AG04449 (cell line): ENCODE measurements at regions of chr1 and their contacts with region 1.

Region 1: GRCh38 chr1:70134148-70134547 is 71.2 kb downstream of the LRRC40 start:
- DNase-seq: no peak
- H3K4me3 ChIP-seq: no peak overlapping the region
- CTCF ChIP-seq: no peak

Region 2: DNA sequence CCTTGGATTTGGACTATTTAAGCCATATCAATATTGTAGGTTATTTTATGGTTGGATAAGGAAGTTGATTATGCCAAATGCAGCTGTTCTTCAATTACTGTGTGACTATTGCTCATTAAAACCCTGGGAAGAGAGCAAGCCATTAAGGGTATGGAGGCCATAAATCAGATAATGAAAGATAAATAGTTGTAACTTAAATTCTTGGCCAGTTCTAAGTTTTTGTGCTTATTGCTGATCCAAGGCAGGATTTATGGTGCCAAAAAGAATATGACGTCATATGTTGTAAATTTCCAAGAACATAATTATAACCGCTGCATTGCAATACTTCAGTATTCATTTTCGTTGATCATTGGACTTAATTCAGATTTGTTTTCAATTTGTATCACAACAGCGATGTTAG is 140.4 kb before region 1 on chr1:
- CTCF ChIA-PET with region 1: no interaction called
- POLR2A ChIA-PET with region 1: no interaction called
- DNase-seq: no peak
- H3K4me3 ChIP-seq: no peak overlapping the region
- CTCF ChIP-seq: no peak

Region 3: GRCh38 chr1:70093250-70093975 is 40.7 kb before region 1 on chr1:
- CTCF ChIA-PET with region 1: interaction called, 16 read pairs
- POLR2A ChIA-PET with region 1: no interaction called
- DNase-seq: no peak
- H3K4me3 ChIP-seq: no peak overlapping the region
- CTCF ChIP-seq: no peak

Region 4: DNA sequence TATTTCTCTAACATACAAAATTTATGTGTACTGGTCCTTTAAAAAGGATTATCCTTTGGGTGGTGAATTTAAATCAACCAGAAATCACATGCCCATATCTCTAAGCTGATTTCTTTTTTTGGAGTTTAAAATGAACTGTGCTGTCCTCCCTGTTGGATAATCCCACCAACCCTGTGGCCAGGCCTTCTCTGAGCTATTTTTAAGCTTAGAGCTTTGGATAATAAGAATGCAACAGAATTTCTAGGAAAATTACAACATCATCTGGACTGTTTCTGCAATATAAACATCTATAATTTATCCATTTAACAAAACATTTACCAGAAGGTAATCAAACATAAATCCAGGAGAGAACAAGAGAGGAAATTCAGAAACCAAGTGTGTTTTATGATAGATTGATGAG is 17.1 kb before region 1 on chr1:
- CTCF ChIA-PET with region 1: interaction called, 20 read pairs
- POLR2A ChIA-PET with region 1: no interaction called
- DNase-seq: no peak
- H3K4me3 ChIP-seq: no peak overlapping the region
- CTCF ChIP-seq: no peak

Region 5: GRCh38 chr1:70504821-70505193 is 370.7 kb after region 1 on chr1:
- CTCF ChIA-PET with region 1: interaction called, 25 read pairs
- POLR2A ChIA-PET with region 1: no interaction called
- DNase-seq: peak; percentile 40
- H3K4me3 ChIP-seq: no peak overlapping the region
- CTCF ChIP-seq: no peak